Psoas muscle (tissue), 8 donors: ENCODE measurements at regions of chr15 and their contacts with region 1.

Region 1: DNA sequence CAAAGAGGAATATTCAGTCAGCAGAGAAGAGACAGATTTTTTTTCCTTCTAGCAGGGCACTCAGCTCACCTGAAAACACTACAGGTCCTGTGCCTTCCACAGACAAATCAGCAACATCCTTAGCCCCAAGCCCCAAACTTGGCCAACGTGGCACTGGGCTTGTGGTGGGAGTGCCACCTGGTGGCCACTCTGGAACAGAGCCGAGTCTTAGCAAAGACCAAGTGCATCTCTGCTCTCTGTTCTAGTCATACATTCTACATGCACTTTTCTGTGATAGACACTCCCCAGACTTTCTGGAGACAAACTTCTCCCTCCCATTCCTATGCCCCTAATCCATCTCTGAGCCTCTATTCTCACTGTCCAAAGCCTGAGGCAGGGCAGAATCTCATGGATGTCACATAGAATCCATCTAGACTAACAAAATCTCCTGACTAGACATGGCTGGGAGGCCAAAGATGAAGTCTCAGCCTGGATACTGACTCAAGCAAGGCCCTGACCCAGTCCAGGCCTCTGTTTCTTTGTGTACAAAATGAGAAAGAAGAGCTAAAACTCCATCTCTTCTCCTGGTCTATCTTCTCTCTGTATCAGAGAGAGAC is 5.1 kb upstream of the SEMA7A start:
- DNase-seq: peak; percentile 66 to 83
- ATAC-seq: peak; percentile 73 to 80 (median 74)
- H3K4me3 ChIP-seq: no peak overlapping the region
- H3K27ac ChIP-seq: no peak overlapping the region
- H3K4me1 ChIP-seq: peaks cover 9% of the 10 kb centered on the region
- H3K27me3 ChIP-seq: no peaks in the 10 kb centered on the region
- CTCF ChIP-seq: peak; percentile 90

Region 2: DNA sequence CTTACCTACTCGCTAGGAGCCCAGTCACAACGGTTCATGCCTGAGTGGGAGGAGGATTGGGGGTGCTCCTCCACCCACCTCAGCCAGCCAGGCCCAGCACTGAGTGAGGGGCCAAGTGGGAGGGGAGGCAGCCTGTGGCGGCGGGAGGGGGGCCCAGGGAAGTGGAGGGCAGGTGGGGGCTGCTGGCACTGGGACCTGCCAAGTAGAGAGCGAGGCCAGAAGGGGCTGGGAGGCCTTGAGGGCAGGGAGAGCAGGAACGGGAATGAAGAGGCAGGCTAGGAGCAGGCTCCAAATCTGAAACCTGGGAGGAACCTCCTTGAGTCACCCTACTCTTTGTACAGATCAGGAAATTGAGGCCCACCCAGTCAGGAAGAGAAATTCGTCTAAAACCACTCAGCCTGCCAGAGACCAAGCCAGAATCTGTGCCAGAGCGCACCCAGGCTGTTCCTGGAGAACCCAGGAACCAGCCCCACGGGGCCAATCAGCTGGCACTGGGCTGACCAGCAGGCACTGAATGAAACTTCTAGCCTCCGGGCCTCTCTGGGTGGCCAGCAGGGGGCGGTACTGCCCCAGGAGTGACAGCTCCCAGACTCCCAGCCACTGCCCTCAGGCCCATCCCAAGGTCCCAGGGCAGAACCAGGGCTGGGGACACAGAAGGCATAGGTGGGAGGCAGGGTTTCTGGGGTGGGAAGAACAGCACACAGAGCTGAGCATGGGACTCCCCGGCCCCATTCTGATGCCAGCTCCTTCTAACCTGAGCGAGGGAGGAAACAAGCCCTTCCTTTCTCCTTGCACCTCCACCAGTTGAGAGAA is 56.6 kb before region 1 on chr15:
- intact Hi-C with region 1: loop called (anchors 1 to 2 kb)
- DNase-seq: peak; percentile 86 to 89
- ATAC-seq: peak; percentile 89 to 96 (median 93)
- H3K4me3 ChIP-seq: no peak overlapping the region
- H3K27ac ChIP-seq: no peak overlapping the region
- H3K4me1 ChIP-seq: no peaks in the 10 kb centered on the region
- H3K27me3 ChIP-seq: no peaks in the 10 kb centered on the region
- CTCF ChIP-seq: peak; percentile 95

Region 3: GRCh38 chr15:74489518-74490338 is 50.9 kb after region 1 on chr15:
- intact Hi-C with region 1: loop called in 1 of 2 experiments (anchors 5 kb)
- DNase-seq: peak; percentile 40 to 68
- ATAC-seq: peak; percentile 64 to 86 (median 80)
- H3K4me3 ChIP-seq: no peak overlapping the region
- H3K27ac ChIP-seq: no peak overlapping the region
- H3K4me1 ChIP-seq: no peaks in the 10 kb centered on the region
- H3K27me3 ChIP-seq: no peaks in the 10 kb centered on the region
- CTCF ChIP-seq: peak; percentile 65

Region 4: GRCh38 chr15:74502301-74502700 is 63.5 kb after region 1 on chr15:
- intact Hi-C with region 1: no loop called
- DNase-seq: no peak
- ATAC-seq: no peak
- H3K4me3 ChIP-seq: no peak overlapping the region
- H3K27ac ChIP-seq: no peak overlapping the region
- H3K4me1 ChIP-seq: no peaks in the 10 kb centered on the region
- H3K27me3 ChIP-seq: no peaks in the 10 kb centered on the region
- CTCF ChIP-seq: no peak

Region 5: DNA sequence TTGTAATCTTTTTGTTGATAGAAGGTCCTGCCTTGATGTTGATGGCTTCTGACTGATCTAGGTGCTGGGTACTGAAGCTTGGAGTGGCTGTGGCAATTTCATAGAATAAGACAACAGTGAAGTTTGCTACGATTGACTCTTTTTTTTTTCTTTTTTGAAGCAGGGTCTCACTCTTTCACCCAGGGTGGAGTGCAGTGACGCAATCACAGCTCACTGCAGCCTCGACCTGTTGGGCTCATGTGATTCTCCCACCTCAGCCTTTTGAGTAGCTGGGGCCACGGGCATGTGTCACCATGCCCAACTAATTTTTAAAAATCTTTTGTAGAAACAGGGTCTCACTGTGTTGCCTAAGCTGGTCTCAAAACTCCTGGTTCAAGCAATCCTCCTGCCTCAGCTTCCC is 116.4 kb after region 1 on chr15:
- intact Hi-C with region 1: no loop called
- DNase-seq: no peak
- ATAC-seq: no peak
- H3K4me3 ChIP-seq: no peak overlapping the region
- H3K27ac ChIP-seq: no peak overlapping the region
- H3K4me1 ChIP-seq: no peaks in the 10 kb centered on the region
- H3K27me3 ChIP-seq: no peaks in the 10 kb centered on the region
- CTCF ChIP-seq: no peak